Activated CD4-positive, alpha-beta memory T cell treated with anti-CD3 and anti-CD28 coated beads for 36 hours (primary cell): ENCODE measurements at regions of chr19 and their contacts with region 1.

Region 1: DNA sequence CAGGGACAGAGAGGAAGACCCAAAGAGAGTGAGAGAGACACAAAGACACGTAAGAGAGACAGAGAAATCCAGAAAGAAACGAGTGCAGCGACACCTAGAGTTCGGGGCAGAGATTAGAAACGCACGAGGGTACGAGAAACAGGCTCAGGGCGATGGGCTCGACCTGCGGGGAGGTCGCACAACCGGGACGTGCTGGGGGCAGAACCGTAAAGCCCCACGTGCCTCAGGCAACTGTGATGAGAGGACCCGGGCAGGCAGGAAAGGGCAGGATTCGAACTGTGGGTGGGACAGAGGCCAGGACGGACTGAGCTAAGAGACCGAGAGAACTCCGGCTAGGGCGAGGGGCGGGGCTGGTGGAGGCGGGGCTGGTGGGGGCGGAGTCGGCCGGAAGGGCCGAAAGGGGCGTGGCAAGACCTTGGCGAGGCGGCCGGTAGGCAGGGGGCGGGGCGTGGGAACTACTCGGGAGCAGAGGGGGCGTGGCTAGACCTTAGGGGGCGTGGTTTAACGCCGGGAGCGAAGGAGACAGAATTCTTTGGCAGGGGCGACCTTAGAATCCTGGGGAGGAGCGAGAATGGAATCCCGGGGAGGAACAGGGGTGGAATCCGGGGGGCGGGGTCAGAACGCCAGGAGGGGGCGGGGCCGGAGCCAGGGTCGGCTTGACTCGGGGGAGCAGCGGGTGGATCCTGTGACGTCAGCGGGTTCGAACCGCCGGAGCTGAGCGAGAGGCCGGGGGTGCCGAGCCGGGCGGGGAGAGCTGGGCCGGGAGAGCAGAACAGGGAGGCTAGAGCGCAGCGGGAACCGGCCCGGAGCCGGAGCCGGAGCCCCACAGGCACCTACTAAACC is at the start of gene NECTIN2:
- DNase-seq: peak; percentile 96
- H3K4me3 Mint-ChIP-seq: peak within 1 kb of the TSS; percentile 81
- H3K27ac Mint-ChIP-seq: peak within 1 kb of the TSS; percentile 24
- H3K4me1 Mint-ChIP-seq: peaks cover 26% of the 10 kb centered on the region
- H3K27me3 Mint-ChIP-seq: peaks cover 11% of the 10 kb centered on the region
- total RNA-seq, gene NECTIN2: 0.71 to 1.9 TPM

Region 2: DNA sequence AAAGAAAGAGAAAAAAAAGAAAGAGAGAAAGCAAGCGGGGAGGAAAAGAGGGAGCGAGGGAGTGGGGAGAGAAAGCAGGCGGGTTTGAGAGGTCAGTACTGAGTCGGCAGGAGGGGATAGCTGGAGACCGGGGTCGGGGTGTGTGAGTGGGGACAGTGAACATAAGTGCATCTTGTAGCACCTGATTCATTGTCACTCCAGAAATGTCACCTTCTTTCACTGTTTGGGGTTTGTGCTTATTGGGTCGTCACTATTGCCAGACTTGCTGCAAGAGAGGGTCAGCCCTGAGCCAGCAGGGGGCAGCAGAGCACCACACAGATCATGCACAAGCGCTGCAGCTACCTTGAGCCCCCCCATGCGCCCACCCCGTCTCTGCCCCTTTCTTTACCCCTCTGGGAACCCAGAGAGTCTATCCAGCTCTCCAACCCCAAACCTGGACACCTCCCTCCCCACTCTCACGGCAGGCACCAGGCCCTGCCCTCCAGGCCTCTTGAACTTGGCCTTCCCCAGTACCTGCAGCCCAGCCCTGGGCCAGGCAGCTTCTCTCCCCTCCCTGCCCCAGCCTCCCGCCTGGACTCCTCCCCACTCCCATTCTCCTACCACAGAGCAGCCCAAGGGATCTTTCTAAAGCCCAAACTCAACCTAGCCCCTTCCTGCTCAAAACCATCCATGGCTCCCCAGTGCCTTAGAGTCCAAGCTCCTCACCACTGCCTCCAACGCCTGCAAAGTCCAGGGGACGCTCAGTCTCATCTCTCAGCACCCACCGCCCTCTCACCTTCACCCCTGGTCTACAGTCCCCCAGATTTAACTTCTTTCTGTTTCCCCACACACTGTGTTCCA is 156.6 kb before region 1 on chr19:
- CTCF ChIA-PET with region 1: interaction called, 15 read pairs
- POLR2A ChIA-PET with region 1: no interaction called
- intact Hi-C with region 1: loop called (anchors 2 kb)
- DNase-seq: peak; percentile 81
- H3K4me3 Mint-ChIP-seq: no peak overlapping the region
- H3K27ac Mint-ChIP-seq: no peak overlapping the region
- H3K4me1 Mint-ChIP-seq: peaks cover 32% of the 10 kb centered on the region
- H3K27me3 Mint-ChIP-seq: peaks cover 10% of the 10 kb centered on the region

Region 3: GRCh38 chr19:44782729-44783128 is 63.1 kb before region 1 on chr19:
- CTCF ChIA-PET with region 1: interaction called, 23 read pairs
- POLR2A ChIA-PET with region 1: no interaction called
- intact Hi-C with region 1: loop called (anchors 1 kb)
- DNase-seq: no peak
- H3K4me3 Mint-ChIP-seq: no peak overlapping the region
- H3K27ac Mint-ChIP-seq: no peak overlapping the region
- H3K4me1 Mint-ChIP-seq: peaks cover 4% of the 10 kb centered on the region
- H3K27me3 Mint-ChIP-seq: peaks cover 3% of the 10 kb centered on the region

Region 4: DNA sequence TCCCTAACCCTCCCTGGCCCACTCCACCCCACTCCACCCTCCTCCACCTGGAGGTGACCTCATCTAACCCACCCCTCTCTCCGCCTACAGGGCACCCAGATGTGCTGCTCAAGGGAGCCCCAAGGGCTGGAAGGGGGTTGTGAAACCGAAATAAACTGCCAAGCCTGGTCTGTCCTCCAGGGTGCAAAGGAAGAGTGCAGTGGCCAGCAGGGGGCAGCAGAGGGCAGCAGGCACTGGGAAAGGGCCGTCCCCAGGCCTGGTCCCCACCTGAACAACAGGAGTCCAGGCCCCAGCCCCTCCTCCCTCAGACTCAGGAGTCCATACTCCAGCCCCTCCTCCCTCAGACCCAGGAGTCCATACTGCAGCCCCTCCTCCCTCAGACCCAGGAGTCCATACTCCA is 45.4 kb before region 1 on chr19:
- CTCF ChIA-PET with region 1: interaction called, 13 read pairs
- POLR2A ChIA-PET with region 1: no interaction called
- intact Hi-C with region 1: loop called (anchors 1 kb)
- DNase-seq: peak; percentile 88
- H3K4me3 Mint-ChIP-seq: no peak overlapping the region
- H3K27ac Mint-ChIP-seq: no peak overlapping the region
- H3K4me1 Mint-ChIP-seq: peaks cover 14% of the 10 kb centered on the region
- H3K27me3 Mint-ChIP-seq: no peaks in the 10 kb centered on the region

Region 5: GRCh38 chr19:44813070-44813840 is 32.6 kb before region 1 on chr19:
- CTCF ChIA-PET with region 1: no interaction called
- POLR2A ChIA-PET with region 1: no interaction called
- intact Hi-C with region 1: no loop called
- DNase-seq: no peak
- H3K4me3 Mint-ChIP-seq: no peak overlapping the region
- H3K27ac Mint-ChIP-seq: no peak overlapping the region
- H3K4me1 Mint-ChIP-seq: peaks cover 3% of the 10 kb centered on the region
- H3K27me3 Mint-ChIP-seq: peaks cover 14% of the 10 kb centered on the region